ENCODE measurements at regions of chr2 and their contacts with region 1.

Region 1: DNA sequence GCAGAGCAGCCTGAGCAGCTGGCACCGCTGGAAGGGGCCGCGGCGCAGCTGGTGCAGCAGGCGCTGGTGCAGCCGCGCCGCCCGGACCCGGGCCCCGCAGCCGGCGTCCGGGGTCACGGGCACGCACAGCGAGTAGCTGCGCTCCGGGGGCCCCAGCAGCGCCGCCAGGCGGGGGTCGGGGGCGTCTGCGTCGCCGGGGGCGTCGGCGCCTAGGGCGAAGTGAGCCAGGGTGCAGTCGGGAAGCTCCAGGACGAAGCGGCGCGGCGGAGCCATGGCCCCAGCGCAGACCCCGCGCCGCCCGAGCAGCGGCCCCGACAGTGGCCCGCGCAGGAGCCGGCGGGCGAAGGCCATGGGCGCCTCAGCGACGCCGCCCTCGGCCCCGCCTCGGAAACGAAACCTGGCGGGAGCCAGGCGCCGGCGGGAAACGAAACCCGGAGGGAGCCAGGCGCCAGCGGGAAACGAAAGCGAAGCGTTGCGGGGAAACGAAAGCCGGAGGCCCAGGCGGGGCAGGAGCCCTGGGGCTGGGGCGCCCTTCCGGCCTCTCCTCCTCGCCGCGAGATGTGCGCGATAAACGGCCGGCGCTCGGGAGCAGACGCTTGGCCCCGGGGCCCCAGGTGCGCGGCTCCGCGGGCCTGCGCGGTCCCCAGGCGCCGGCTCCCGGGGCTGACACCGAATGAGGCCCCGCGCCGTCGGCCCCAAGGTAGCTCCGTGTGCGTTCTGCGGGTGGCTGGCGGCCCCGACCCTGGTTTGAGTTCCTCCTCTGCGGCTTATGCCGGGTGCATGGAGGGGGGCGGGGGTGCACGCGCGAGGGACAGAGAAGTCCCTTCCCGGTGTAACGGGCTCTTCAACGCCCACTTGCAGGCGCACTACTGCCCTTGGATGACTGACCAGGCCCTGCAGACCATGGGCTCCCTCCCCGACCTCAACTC is at the start of gene CMPK2:
- DNase-seq: peak; percentile 89
- ATAC-seq: peak; percentile 77
- H3K4me3 Mint-ChIP-seq: peak within 1 kb of the TSS; percentile 93
- H3K27ac Mint-ChIP-seq: peak within 1 kb of the TSS; percentile 98
- H3K4me1 Mint-ChIP-seq: peaks cover 12% of the 10 kb centered on the region
- H3K27me3 Mint-ChIP-seq: peaks cover 7% of the 10 kb centered on the region
- total RNA-seq, gene CMPK2: 6.2 to 8.7 TPM

Region 2: GRCh38 chr2:5725794-5726463 is 1139.7 kb before region 1 on chr2:
- CTCF ChIA-PET with region 1: no interaction called
- POLR2A ChIA-PET with region 1: no interaction called
- intact Hi-C with region 1: no loop called
- DNase-seq: no peak
- ATAC-seq: no peak
- H3K4me3 Mint-ChIP-seq: no peak overlapping the region
- H3K27ac Mint-ChIP-seq: no peak overlapping the region
- H3K4me1 Mint-ChIP-seq: peaks cover 3% of the 10 kb centered on the region
- H3K27me3 Mint-ChIP-seq: peaks cover 7% of the 10 kb centered on the region

Region 3: GRCh38 chr2:6780765-6781274 is 84.8 kb before region 1 on chr2:
- CTCF ChIA-PET with region 1: no interaction called
- POLR2A ChIA-PET with region 1: no interaction called
- intact Hi-C with region 1: no loop called
- DNase-seq: peak; percentile 55
- ATAC-seq: peak; percentile 89
- H3K4me3 Mint-ChIP-seq: no peak overlapping the region
- H3K27ac Mint-ChIP-seq: no peak overlapping the region
- H3K4me1 Mint-ChIP-seq: peaks cover 10% of the 10 kb centered on the region
- H3K27me3 Mint-ChIP-seq: no peaks in the 10 kb centered on the region

Region 4: GRCh38 chr2:6826081-6826913 is 39.3 kb before region 1 on chr2:
- CTCF ChIA-PET with region 1: interaction called, 4 read pairs
- POLR2A ChIA-PET with region 1: no interaction called
- intact Hi-C with region 1: loop called (anchors 1 kb)
- DNase-seq: peak; percentile 78
- ATAC-seq: peak; percentile 97
- H3K4me3 Mint-ChIP-seq: no peak overlapping the region
- H3K27ac Mint-ChIP-seq: no peak overlapping the region
- H3K4me1 Mint-ChIP-seq: peaks cover 9% of the 10 kb centered on the region
- H3K27me3 Mint-ChIP-seq: no peaks in the 10 kb centered on the region

Region 5: DNA sequence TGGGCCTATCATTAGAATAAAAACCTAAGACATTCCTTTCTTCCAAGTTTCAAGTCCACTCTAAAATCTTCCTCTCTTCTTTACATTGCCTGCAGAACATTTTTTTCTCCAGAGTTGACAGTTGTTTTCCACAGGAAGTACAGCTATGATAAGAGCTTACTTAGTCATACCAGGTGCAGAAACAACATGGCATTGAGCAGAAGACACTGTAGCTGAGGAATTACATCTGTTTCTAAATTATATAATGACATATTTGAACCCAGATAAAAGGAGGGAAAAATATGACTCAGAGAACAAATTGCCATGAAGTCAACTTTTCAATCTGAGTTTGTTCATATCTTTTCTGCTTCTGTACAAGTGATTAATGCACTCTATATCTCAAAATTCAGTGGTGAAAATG is 30.1 kb before region 1 on chr2:
- CTCF ChIA-PET with region 1: interaction called, 4 read pairs
- POLR2A ChIA-PET with region 1: no interaction called
- intact Hi-C with region 1: loop called (anchors 1 to 2 kb)
- DNase-seq: no peak
- ATAC-seq: peak; percentile 92
- H3K4me3 Mint-ChIP-seq: no peak overlapping the region
- H3K27ac Mint-ChIP-seq: no peak overlapping the region
- H3K4me1 Mint-ChIP-seq: peaks cover 18% of the 10 kb centered on the region
- H3K27me3 Mint-ChIP-seq: no peaks in the 10 kb centered on the region

Region 6: GRCh38 chr2:6877402-6878304 is 12.0 kb after region 1 on chr2 and contains the start of gene RSAD2:
- CTCF ChIA-PET with region 1: interaction called, 59 read pairs
- POLR2A ChIA-PET with region 1: interaction called, 4 read pairs
- intact Hi-C with region 1: loop called in 1 of 2 experiments (anchors 1 kb)
- DNase-seq: peak; percentile 52
- ATAC-seq: peak; percentile 86
- H3K4me3 Mint-ChIP-seq: peak within 1 kb of the TSS; percentile 68
- H3K27ac Mint-ChIP-seq: peak within 1 kb of the TSS; percentile 38
- H3K4me1 Mint-ChIP-seq: peaks cover 77% of the 10 kb centered on the region
- H3K27me3 Mint-ChIP-seq: no peaks in the 10 kb centered on the region
- total RNA-seq, gene RSAD2: 8.1 to 10.2 TPM

Region 7: DNA sequence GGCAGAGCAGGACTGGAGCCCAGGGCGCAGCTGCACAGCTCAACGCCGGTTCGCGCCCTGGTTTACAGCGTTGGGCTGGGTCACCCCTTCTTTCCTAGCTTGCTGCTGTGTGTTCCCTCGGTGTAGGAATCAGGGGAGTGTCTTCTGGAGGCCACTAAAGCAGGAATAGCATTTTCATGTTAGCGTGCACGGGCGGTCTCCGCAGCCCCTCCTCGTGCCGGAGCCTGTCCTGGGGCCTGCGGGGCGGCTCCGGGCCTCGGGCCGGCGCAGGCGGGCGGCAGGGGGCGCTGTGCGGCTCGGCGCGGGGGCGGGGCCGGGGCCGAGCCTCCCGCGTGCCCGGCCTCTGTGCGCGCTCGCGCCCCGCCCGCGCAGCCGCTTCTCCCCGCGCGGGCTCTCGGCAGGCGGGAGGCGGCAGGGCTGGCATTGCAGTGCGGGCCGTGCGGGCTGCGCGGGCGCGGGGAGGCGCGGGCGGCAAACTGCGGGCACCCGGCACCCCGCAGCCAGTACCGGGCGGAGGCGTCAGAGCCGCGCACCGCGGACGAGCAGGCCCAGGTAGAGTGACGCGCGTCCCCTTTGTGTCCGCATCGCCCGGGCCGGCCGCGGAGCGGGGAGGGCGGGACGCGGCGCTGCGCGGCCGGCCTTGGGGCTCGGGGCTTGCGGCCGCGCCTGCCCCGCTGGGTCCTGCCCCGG is 51.6 kb after region 1 on chr2 and contains the start of gene RNF144A:
- CTCF ChIA-PET with region 1: interaction called, 11 read pairs
- POLR2A ChIA-PET with region 1: interaction called, 3 read pairs
- intact Hi-C with region 1: loop called in 1 of 2 experiments (anchors 2 kb)
- DNase-seq: peak; percentile 84
- ATAC-seq: peak; percentile 54
- H3K4me3 Mint-ChIP-seq: peak within 1 kb of the TSS; percentile 72
- H3K27ac Mint-ChIP-seq: peak within 1 kb of the TSS; percentile 82
- H3K4me1 Mint-ChIP-seq: peaks cover 79% of the 10 kb centered on the region
- H3K27me3 Mint-ChIP-seq: no peaks in the 10 kb centered on the region
- total RNA-seq, gene RNF144A: 38.6 to 42.7 TPM

Region 8: DNA sequence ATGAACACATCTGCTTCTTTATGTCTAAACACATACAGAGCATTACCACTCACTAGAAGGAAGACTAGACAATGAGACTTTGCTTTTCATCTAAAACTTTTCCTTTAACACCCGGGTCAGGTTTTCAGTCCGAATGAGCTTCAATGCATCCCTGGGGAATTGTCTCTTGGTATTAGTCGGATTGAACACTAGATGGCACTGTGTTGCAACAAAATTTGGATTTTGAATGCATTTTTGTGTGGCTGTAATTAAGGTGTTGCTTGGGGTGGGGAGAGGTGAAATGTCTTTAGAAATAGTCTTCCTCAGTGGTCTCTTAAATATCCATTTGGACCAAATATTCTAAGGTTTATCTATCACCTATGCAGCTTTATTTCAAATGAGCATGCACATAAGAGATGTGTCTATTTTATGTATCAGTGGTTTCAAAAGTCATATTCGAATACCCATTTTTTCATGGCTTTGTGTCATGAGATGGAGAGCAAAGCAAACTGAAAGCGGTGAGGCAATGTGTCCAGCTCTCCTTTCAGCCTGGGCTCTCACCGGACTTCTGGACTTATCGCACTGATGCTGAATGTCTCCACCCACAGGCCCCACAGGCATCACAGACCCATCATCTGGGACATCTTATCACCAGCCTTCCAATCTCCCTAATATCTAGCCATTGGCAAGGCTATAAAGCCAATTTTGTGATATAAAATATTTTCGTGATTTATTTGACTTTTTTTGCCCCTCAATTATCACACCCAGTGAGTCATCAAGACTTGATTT is 561.9 kb after region 1 on chr2:
- CTCF ChIA-PET with region 1: no interaction called
- POLR2A ChIA-PET with region 1: no interaction called
- intact Hi-C with region 1: no loop called
- DNase-seq: no peak
- ATAC-seq: no peak
- H3K4me3 Mint-ChIP-seq: no peak overlapping the region
- H3K27ac Mint-ChIP-seq: peak overlapping the region; percentile 51
- H3K4me1 Mint-ChIP-seq: peaks cover 41% of the 10 kb centered on the region
- H3K27me3 Mint-ChIP-seq: peaks cover 9% of the 10 kb centered on the region